ENCODE measurements at regions of chr1 and their contacts with region 1.

Region 1: GRCh38 chr1:180271272-180272255 is 41.5 kb downstream of the LHX4 start:
- DNase-seq: no peak
- H3K4me3 ChIP-seq: no peak overlapping the region
- H3K27ac ChIP-seq: no peak overlapping the region
- H3K4me1 ChIP-seq: no peaks in the 10 kb centered on the region
- H3K27me3 ChIP-seq: no peaks in the 10 kb centered on the region
- CTCF ChIP-seq: no peak

Region 2: DNA sequence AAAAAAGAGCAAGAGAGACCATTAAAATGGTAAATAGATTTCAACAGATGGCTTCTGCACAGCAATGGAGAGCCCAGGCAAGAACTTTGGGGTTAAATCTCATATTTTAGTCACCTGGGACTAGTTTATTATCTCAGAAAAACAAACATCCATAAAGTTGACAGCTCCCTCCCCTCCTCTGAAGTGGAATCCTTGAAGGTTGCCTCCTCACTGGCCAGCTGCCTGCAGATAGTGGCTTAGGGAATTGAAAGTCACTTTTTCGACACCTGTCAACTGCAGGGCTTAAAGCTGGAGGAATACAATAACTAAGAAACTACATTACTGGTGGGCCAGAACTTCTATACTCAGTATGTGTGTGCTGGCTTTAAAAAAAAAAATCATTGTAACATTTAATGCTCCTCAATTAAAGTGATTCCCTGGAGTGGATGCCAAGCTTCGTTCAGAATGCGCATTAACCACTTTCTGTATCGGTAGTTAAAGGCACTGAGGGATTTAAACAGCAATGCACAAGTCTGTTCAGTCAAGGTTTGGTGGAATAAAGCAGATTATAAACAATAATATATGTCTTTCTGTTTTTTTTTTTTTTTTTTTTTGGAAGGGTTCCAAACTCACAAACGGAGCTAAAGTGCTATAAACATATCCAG is 11.0 kb after region 1 on chr1:
- CTCF ChIA-PET with region 1: no interaction called
- POLR2A ChIA-PET with region 1: interaction called, 16 read pairs
- intact Hi-C with region 1: no loop called
- DNase-seq: no peak
- H3K4me3 ChIP-seq: no peak overlapping the region
- H3K27ac ChIP-seq: no peak overlapping the region
- H3K4me1 ChIP-seq: peaks cover 11% of the 10 kb centered on the region
- H3K27me3 ChIP-seq: no peaks in the 10 kb centered on the region
- CTCF ChIP-seq: no peak